Tibial artery (tissue), 4 donors: ENCODE measurements at regions of chr20 and their contacts with region 1.

Region 1: GRCh38 chr20:35883778-35884540 is 70.3 kb downstream of the SCAND1 start:
- DNase-seq: peak; percentile 82 to 93
- H3K4me3 ChIP-seq: peak overlapping the region; percentile 15 to 26
- H3K27ac ChIP-seq: peak overlapping the region; percentile 80 to 81
- H3K4me1 ChIP-seq: peaks cover 0 to 13% (median 13%) of the 10 kb centered on the region in 4 donors
- H3K27me3 ChIP-seq: no peaks in the 10 kb centered on the region
- CTCF ChIP-seq: peak; percentile 78

Region 2: GRCh38 chr20:35664544-35665221 is 219.3 kb before region 1 on chr20 and contains the starts of genes CPNE1 and RBM12:
- intact Hi-C with region 1: loop called (anchors 2 kb)
- DNase-seq: peak; percentile 87 to 96
- H3K4me3 ChIP-seq: peak within 1 kb of the TSS; percentile 67 to 87
- H3K27ac ChIP-seq: peak within 1 kb of the TSS; percentile 93 to 99
- H3K4me1 ChIP-seq: peaks cover 0 to 39% (median 24%) of the 10 kb centered on the region in 4 donors
- H3K27me3 ChIP-seq: no peaks in the 10 kb centered on the region
- CTCF ChIP-seq: no peak

Region 3: DNA sequence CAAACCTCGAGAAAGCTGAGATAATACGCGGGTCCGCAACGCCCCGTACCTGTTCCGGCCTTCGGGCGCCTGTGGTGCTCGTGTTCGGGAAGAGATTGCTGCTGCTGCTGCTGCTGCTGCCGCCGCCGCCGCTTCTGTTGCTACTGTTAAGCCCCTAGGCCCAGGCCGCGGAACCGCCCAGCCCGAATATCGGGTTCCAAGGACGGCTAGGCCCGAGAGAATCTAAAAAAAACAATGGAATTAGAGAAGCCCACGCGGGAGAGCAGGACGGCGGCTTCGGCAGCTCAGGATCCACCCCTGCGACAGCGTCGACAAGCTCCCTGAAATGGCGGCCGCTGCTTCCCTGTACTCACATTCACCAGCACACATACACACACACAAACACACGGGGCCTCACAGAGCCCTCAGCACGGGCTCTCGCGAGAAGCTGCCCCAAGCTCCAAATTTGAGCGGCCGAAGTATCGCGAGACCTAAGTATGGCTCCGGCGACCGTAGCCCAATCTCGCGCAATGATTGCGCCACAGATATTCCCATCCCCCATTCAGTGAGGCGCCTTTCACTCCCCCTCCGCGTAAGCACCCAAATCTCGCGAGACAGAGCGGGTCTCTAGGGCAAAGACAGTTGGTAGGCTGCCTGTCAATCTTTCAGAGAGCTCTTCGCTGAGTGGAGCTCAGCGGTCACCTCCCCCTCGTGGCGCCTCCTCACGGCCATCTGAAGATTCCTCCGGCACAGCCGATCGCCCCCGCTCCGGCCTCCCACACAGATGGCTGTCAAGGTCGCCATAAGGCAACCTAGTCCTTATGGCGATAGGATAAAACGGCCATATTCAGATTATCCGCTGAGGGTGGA is 141.8 kb before region 1 on chr20 and contains the start of gene RBM39:
- intact Hi-C with region 1: loop called (anchors 10 kb)
- DNase-seq: peak; percentile 100
- H3K4me3 ChIP-seq: peak within 1 kb of the TSS; percentile 88 to 92
- H3K27ac ChIP-seq: peak within 1 kb of the TSS; percentile 99
- H3K4me1 ChIP-seq: peaks cover 5 to 47% (median 31%) of the 10 kb centered on the region in 4 donors
- H3K27me3 ChIP-seq: no peaks in the 10 kb centered on the region
- CTCF ChIP-seq: peak; percentile 38 to 52

Region 4: GRCh38 chr20:35771689-35772562 is 112.0 kb before region 1 on chr20 and contains the start of gene PHF20:
- intact Hi-C with region 1: loop called (anchors 10 kb)
- DNase-seq: peak; percentile 99 to 100
- H3K4me3 ChIP-seq: peak within 1 kb of the TSS; percentile 64 to 87
- H3K27ac ChIP-seq: peak within 1 kb of the TSS; percentile 93 to 95
- H3K4me1 ChIP-seq: peaks cover 0 to 63% (median 43%) of the 10 kb centered on the region in 4 donors
- H3K27me3 ChIP-seq: no peaks in the 10 kb centered on the region
- CTCF ChIP-seq: peak in 1 of 2 experiments; percentile 56